HEK293T (cell line): ENCODE measurements at regions of chr2 and their contacts with region 1.

Region 1: DNA sequence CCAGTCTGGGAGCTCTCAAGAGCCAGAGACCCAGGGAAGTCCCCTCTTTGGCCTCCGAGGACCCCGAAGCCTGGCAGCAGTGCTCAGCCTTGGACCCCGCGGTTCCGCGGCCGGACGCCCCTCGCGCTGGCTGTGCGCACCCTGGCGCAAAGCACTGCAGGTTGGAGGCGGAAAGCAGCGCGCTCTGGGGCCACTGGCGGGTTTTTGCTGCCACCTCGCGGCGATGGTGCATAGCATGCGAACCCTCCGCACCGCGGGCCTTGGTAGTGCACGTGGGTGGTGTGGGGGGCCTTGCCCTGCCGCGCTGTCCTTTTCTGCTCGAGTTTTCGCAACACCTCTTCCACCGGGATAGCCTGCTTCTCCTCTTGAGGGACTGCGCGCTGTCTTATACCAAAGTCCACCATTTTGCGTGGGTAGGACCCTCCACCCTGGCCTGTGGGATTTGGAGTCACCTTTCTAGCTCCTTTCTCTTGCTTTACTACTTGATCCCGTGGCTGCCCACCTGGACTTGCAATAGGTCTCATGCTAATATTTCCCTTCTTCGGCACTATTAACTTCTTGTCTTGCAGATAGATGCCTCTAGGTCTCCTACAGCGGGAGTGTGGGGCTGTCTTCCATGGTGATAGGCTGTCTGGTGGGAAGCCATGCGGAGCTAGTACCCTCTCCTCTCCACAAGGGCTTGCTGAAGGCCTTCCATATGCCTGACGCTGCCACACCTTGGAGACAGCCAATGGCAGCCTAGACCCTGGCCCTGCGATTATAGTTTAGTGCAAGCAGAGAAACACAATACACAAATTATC is 14.3 kb downstream of the SIX3 start:
- DNase-seq: peak; percentile 83

Region 2: GRCh38 chr2:44392338-44392943 is 563.4 kb before region 1 on chr2:
- CTCF ChIA-PET with region 1: interaction called, 12 read pairs
- POLR2A ChIA-PET with region 1: no interaction called
- DNase-seq: peak; percentile 8

Region 3: GRCh38 chr2:44479122-44479887 is 476.5 kb before region 1 on chr2:
- CTCF ChIA-PET with region 1: interaction called, 17 read pairs
- POLR2A ChIA-PET with region 1: no interaction called
- DNase-seq: peak; percentile 72